K562 (cell line): ENCODE measurements at regions of chr2 and their contacts with region 1.

Region 1: GRCh38 chr2:30037016-30037415 is 109.8 kb upstream of the YPEL5 start:
- DNase-seq: no peak
- ATAC-seq: no peak
- H3K4me3 ChIP-seq: no peak overlapping the region
- H3K27ac ChIP-seq: no peak overlapping the region
- H3K4me1 ChIP-seq: no peaks in the 10 kb centered on the region
- H3K27me3 ChIP-seq: peaks cover 0 to 4% of the 10 kb centered on the region in 2 experiments; a peak in 2 of 5 replicates
- CTCF ChIP-seq: no peak
- EP300 ChIP-seq: no peak
- POLR2A ChIP-seq: no peak
- RAD21 ChIP-seq: no peak

Region 2: DNA sequence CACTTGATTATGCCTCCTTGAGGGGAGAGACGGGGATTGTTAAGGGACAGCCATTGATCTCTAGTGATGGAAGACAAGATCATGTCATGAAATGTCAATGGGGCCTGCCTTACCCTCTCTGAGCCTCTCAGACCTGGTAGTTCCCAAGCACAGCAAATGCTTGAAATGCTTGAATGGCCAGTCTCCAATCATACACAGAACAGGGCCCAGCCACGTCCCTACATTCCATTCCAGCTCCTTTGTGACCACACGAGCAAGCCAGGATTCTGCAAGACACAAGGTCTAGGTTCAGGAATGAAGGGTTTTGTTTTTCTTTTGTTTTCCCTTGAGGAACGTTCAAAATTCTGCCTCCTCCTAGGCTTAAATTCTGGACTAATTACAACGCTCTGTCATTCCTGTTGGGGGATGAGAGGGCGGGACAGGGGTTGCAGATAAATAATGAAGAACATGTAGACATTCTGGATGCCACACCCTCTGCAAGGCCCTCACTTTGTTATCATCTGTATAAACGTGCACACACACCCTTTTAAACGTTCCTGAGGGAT is 11.7 kb after region 1 on chr2:
- CTCF ChIA-PET with region 1: no interaction called
- POLR2A ChIA-PET with region 1: interaction called, 10 read pairs
- in situ Hi-C with region 1: no loop called
- intact Hi-C with region 1: no loop called
- DNase-seq: no peak
- ATAC-seq: no peak
- H3K4me3 ChIP-seq: no peak overlapping the region
- H3K27ac ChIP-seq: no peak overlapping the region
- H3K4me1 ChIP-seq: no peaks in the 10 kb centered on the region
- H3K27me3 ChIP-seq: peaks cover 0 to 8% of the 10 kb centered on the region in 2 experiments; a peak in 2 of 5 replicates
- CTCF ChIP-seq: no peak
- EP300 ChIP-seq: no peak
- POLR2A ChIP-seq: no peak
- RAD21 ChIP-seq: no peak